ENCODE measurements at regions of chr7 and their contacts with region 1.

Region 1: GRCh38 chr7:104643587-104644217 is 315.3 kb downstream of the LHFPL3 start:
- DNase-seq: no peak
- ATAC-seq: no peak
- H3K4me3 ChIP-seq: no peak overlapping the region
- H3K27ac ChIP-seq: no peak overlapping the region
- H3K4me1 ChIP-seq: no peaks in the 10 kb centered on the region
- H3K27me3 ChIP-seq: peaks cover 9% of the 10 kb centered on the region; the same call in 1 of the 2 replicates
- CTCF ChIP-seq: peak; percentile 72

Region 2: GRCh38 chr7:104431930-104432329 is 211.8 kb before region 1 on chr7:
- CTCF ChIA-PET with region 1: no interaction called
- POLR2A ChIA-PET with region 1: no interaction called
- in situ Hi-C with region 1: no loop called
- intact Hi-C with region 1: no loop called
- DNase-seq: no peak
- ATAC-seq: no peak
- H3K4me3 ChIP-seq: no peak overlapping the region
- H3K27ac ChIP-seq: no peak overlapping the region
- H3K4me1 ChIP-seq: no peaks in the 10 kb centered on the region
- H3K27me3 ChIP-seq: no peaks in the 10 kb centered on the region
- CTCF ChIP-seq: no peak

Region 3: DNA sequence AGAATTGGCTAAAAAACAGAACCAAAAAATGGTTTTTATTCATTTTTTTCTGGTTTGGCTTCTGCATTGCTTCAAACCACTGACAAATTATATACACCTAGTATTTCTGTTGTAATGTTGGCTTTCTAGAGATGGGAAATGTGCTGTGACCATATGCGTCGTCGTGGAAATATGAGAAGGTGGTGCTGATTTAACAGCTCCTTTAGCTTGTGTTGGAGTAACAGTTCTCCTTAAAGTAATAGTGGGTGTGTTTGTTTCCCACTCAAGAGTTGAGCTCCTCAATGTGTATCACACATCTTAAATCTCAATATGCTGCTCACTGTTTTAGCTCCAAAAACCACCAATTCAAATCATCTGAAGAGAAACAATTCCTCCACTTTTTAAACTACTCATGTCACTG is 118.9 kb before region 1 on chr7:
- CTCF ChIA-PET with region 1: no interaction called
- POLR2A ChIA-PET with region 1: no interaction called
- in situ Hi-C with region 1: no loop called
- intact Hi-C with region 1: no loop called
- DNase-seq: no peak
- ATAC-seq: no peak
- H3K4me3 ChIP-seq: no peak overlapping the region
- H3K27ac ChIP-seq: no peak overlapping the region
- H3K4me1 ChIP-seq: no peaks in the 10 kb centered on the region
- H3K27me3 ChIP-seq: no peaks in the 10 kb centered on the region
- CTCF ChIP-seq: no peak

Region 4: DNA sequence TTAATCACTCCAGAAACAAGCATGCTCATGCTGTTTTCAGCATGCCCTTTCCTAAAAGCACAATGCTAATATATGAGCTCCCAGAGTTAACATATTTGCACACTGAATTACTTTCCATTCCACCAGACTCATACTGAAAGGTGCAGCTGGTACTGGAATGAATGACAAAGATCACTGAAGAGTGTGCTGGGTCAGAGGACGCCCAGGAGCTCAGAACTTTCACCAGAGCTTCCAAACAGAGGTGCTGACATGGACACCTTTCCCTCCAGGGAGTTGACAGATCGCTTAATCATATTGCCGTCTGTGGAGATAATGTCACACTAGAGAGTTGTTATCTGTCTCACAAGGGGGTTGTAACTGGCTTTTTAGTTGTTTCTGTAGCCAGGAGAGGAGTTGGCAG is 22.4 kb before region 1 on chr7:
- CTCF ChIA-PET with region 1: no interaction called
- POLR2A ChIA-PET with region 1: interaction called, 18 read pairs
- in situ Hi-C with region 1: no loop called
- intact Hi-C with region 1: no loop called
- DNase-seq: no peak
- ATAC-seq: no peak
- H3K4me3 ChIP-seq: no peak overlapping the region
- H3K27ac ChIP-seq: no peak overlapping the region
- H3K4me1 ChIP-seq: no peaks in the 10 kb centered on the region
- H3K27me3 ChIP-seq: peaks cover 2% of the 10 kb centered on the region; the same call in 1 of the 2 replicates
- CTCF ChIP-seq: no peak

Measured in Panc1 (cell line).